ENCODE measurements at regions of chr4 and their contacts with region 1.

Region 1: GRCh38 chr4:93127489-93127888 is 701.1 kb upstream of the ATOH1 start:
- DNase-seq: no peak
- ATAC-seq: no peak
- H3K4me3 ChIP-seq: no peak overlapping the region
- H3K27ac ChIP-seq: no peak overlapping the region
- H3K4me1 ChIP-seq: no peaks in the 10 kb centered on the region
- H3K27me3 ChIP-seq: no peaks in the 10 kb centered on the region
- CTCF ChIP-seq: no peak

Region 2: DNA sequence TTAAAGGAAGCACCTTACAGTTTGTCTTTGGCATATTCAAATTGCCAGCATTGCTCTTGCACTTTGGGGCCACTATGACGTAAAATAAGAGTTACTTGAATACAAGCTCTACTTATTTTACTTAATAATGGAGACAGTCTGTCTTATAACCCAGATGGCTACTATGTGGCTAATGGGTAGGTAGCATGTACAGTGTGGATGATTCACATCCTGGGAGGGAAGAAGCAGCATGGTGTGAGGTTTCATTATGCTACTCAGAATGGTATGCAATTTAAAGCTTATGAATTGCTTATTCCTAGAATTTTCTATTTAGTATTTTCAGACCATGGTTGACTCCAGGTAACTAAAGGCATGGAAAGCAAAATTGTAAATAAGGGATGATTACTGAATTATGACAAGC is 60.7 kb before region 1 on chr4:
- intact Hi-C with region 1: no loop called
- DNase-seq: no peak
- ATAC-seq: no peak
- H3K4me3 ChIP-seq: no peak overlapping the region
- H3K27ac ChIP-seq: no peak overlapping the region
- H3K4me1 ChIP-seq: no peaks in the 10 kb centered on the region
- H3K27me3 ChIP-seq: no peaks in the 10 kb centered on the region
- CTCF ChIP-seq: no peak

Region 3: GRCh38 chr4:93174598-93174997 is 47.1 kb after region 1 on chr4:
- intact Hi-C with region 1: loop called in 1 of 10 experiments (anchors 1 kb)
- DNase-seq: no peak
- ATAC-seq: no peak
- H3K4me3 ChIP-seq: no peak overlapping the region
- H3K27ac ChIP-seq: no peak overlapping the region
- H3K4me1 ChIP-seq: no peaks in the 10 kb centered on the region
- H3K27me3 ChIP-seq: no peaks in the 10 kb centered on the region
- CTCF ChIP-seq: no peak

Region 4: DNA sequence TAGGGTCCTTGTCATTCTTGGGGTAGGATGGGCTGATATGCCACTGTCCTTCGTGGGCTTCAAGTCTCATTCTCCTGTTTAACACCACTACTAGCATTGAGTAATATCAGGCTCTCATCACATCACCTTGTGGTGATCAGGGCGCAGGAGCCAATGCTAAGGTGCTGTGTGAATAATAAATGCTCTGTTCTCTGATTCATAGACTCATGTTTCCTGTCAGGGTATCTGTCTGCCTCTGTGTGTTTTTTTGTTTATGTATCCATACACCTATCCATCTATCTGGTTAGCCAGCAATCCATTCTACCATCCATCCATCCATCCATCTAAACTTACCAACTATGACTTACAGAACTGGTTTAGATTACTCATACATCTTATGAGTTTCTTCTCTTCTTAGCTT is 176.0 kb after region 1 on chr4:
- intact Hi-C with region 1: no loop called
- DNase-seq: no peak
- ATAC-seq: no peak
- H3K4me3 ChIP-seq: no peak overlapping the region
- H3K27ac ChIP-seq: no peak overlapping the region
- H3K4me1 ChIP-seq: no peaks in the 10 kb centered on the region
- H3K27me3 ChIP-seq: no peaks in the 10 kb centered on the region
- CTCF ChIP-seq: no peak

Measured in heart right ventricle (tissue), 16 donors.